ENCODE measurements at regions of chr15 and their contacts with region 1.

Region 1: GRCh38 chr15:32849769-32850668 is 132.2 kb downstream of the GREM1 start:
- DNase-seq: no peak

Region 2: DNA sequence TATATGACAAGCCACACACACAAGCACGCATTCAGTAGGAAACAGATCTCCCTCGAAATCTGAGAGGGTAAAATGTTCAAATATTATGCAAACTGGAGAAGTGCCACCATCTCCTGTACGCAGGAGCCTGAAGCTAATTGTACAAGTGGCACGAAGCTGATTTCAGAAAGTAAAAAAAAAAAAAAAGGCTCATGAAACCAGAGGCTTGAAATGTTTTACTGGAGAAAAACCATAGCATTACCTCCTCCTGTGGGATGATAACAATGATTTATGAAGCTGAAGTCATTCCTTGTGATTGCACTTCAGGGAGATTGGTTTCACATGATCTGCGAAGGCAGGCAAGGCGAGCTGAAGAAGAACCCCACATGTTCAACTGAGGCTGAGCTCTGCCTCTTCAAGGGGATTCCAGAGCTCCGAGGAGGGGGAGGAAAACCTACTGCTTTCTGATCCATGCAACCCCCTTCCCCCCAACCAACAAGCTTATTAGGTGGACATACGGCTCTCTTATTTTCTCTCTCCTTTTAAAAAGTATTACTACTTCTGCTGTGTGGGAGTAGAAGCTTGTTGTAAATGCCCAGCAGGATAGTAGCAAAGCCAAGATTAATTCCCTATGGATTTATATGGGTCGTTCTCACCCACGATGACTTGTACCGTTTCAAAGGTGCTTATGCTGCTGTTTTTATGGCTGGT is 31.1 kb before region 1 on chr15:
- intact Hi-C with region 1: no loop called
- DNase-seq: no peak

Region 3: DNA sequence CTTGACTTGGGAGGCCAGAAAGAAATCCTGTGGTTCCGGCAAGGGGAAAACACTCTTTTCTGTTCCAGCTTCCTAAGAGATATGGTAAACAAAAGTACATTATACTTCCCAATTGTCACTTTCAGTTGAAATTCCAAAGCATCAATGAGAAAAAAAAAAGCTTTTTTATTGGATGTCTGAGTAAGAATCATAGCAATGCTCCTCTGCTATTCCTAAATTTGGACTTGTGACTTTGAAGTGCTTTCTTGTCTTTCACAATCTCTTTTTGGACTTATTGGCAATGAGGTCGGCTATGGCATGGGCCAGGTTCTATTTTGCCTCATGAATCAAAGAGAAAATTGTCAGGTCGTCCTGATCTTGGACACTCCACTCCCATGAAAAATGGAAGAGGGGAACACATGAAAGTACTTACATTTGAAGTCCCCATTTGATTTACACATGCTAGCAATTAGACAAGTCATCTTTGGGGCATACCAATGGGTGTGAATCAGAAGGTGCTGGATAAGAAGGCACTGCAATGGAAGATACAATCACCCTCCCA is 38.3 kb after region 1 on chr15:
- intact Hi-C with region 1: loop called in 1 of 2 experiments (anchors 5 kb)
- DNase-seq: no peak